Adrenal gland (tissue), 19 donors: ENCODE measurements at regions of chr12 and their contacts with region 1.

Region 1: DNA sequence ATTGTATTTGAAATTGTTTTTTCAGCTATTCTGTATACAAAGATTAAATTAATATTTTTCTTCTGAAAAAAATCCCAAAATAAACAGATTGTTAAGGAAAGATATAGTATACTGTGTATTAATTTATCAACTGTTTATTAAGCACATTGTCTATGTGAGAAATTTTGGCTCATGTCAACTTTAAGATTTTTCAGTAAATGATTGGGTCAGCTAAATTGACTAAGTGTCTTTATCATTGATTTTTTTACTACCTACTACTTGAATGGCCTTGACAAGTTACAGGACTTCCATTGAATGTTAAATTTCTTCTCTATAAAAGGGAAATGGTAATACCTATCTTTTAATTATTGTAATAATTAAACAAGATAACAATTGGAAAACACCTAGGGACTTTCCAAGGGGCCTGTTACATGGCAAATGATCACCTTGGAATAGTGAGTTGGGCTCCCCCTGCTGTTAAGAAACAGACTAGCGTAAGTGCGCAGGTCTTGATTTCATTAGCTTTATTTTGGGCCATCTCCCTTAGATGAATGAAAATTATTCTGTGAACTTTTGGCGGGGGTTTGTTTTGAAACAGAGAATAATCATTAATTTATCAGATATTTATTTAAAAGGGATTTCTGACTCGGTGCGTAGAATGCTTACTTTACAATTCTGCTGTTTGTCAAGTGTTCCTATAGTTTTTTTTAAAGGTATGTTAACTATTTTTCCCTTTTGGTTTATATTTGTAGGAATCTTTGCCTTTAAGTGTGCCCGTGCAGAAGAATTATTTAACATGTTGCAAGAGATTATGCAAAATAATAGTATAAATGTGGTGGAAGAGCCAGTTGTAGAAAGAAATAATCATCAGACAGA is 14.5 kb upstream of the CCT2 start:
- DNase-seq: peak; percentile 43 to 85 (median 57)
- H3K4me3 ChIP-seq: no peak overlapping the region
- H3K27ac ChIP-seq: no peak overlapping the region
- H3K4me1 ChIP-seq: no peaks in the 10 kb centered on the region
- H3K27me3 ChIP-seq: no peaks in the 10 kb centered on the region
- CTCF ChIP-seq: peak; percentile 70 to 85 (median 80)
- POLR2A ChIP-seq: no peak

Region 2: DNA sequence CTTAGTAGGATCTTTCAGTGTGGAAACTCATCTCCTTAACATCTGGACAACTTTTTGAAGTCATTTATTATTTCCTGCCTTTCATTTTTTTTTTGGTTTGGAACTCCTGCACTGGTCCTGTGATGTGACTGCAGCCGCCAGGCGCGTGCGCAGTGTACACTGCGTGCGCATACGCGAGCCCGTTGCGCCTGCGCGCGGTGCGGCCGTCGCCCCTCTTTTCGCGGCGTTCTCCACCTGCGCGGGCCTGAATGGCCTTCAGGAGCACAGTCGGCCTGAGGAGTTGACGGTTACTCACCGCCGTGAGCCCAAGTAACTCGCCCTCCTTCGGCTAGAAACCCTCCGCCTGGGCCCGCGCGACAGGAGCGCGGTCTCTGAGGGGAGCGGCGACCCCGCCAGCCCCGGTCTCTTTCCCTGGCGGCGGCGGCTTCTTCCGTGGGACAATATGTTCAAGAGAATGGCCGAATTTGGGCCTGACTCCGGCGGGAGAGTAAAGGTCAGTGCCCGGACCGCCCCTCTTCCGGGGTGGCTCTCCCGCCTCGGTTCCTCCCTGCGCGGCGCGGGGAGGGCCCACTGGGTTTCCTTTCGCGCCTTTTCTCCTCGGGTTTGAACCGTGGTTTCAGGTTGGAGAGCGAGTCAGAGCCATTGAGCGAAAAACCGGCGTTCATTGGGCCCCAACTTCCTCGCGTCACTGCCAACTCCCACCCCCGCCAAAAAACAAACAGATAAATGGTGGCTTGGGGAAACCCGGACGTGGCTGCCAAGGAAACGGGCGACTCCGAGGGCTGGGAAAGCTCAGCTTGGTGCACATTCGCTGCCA is 211.0 kb before region 1 on chr12 and contains the start of gene YEATS4:
- intact Hi-C with region 1: loop called in 1 of 2 experiments (anchors 5 kb)
- DNase-seq: peak; percentile 84 to 95 (median 89)
- H3K4me3 ChIP-seq: peak within 1 kb of the TSS; percentile 35 to 91 (median 70)
- H3K27ac ChIP-seq: peak within 1 kb of the TSS; percentile 77 to 98 (median 93)
- H3K4me1 ChIP-seq: peaks cover 7 to 19% of the 10 kb centered on the region in 2 donors
- H3K27me3 ChIP-seq: no peaks in the 10 kb centered on the region
- CTCF ChIP-seq: peak in 1 of 6 experiments; percentile 14
- POLR2A ChIP-seq: peak in 1 of 2 donors; percentile 68
- total RNA-seq, gene YEATS4: 5.6 to 57.9 (median 25.7) TPM

Region 3: DNA sequence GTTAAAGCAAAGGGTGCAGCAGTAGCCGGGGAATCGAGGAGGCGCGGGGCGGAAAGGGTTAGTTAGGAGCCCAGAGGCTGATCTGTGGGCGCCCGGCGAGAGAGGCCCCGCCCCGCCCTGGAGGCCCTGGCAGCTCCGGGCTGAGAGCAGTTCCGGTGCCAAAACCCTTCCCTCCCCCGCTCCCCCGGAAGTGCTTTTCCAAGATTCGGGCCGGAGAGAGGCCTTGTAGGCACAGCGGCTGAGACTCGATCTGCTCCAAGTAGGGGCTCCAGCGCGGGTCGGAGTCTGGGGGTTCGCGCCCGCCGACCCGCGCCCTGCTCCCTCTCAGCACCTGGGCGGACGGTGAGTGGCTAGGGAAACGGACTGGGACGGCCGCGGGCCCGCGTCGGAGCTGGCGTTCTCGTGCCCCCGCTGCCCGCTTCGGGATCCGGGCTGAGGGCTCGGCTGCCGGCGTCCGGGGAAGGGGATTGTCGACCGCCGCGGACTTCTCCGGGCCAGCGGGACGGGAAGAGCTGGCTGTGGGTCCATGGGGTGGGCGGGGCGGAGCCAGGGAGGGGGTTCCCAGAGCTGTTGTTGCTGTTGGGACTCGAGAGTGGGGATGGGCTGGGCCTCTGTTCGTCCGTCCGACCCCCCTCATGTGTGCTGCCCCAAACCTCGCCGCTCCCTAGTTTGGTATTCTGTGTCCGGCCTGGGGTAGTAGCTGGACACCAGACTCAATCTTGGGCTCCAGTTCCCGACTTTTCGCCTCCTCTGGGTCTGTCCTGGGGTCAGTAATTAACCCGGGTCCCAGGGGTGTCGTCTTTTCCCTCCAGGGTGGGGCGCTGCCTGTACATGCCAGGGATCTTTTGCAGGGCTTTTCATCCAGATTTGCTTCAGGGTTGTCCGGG is 100.3 kb before region 1 on chr12 and contains the start of gene FRS2:
- intact Hi-C with region 1: loop called in 1 of 2 experiments (anchors 5 kb)
- DNase-seq: peak; percentile 90 to 95 (median 94)
- H3K4me3 ChIP-seq: peak within 1 kb of the TSS; percentile 67 to 96 (median 89)
- H3K27ac ChIP-seq: peak within 1 kb of the TSS; percentile 78 to 97 (median 92)
- H3K4me1 ChIP-seq: peaks cover 30 to 49% of the 10 kb centered on the region in 2 donors
- H3K27me3 ChIP-seq: no peaks in the 10 kb centered on the region
- CTCF ChIP-seq: peak in 5 of 6 experiments; percentile 34 to 54 (median 44)
- POLR2A ChIP-seq: peak; percentile 76 to 84
- total RNA-seq, gene FRS2: 36.2 to 86.1 (median 47.2) TPM

Region 4: GRCh38 chr12:69947897-69948296 is 377.1 kb after region 1 on chr12:
- intact Hi-C with region 1: no loop called
- DNase-seq: no peak
- H3K4me3 ChIP-seq: no peak overlapping the region
- H3K27ac ChIP-seq: no peak overlapping the region
- H3K4me1 ChIP-seq: no peaks in the 10 kb centered on the region
- H3K27me3 ChIP-seq: no peaks in the 10 kb centered on the region
- CTCF ChIP-seq: no peak
- POLR2A ChIP-seq: no peak